K562 (cell line): ENCODE measurements at regions of chr13 and their contacts with region 1.

Region 1: GRCh38 chr13:31909864-31910551 is 121.6 kb upstream of the FRY start:
- DNase-seq: peak; percentile 12 to 58 (median 20)
- ATAC-seq: 0 out of 3 replicates have a peak, but pooled peaks have one; percentile 47
- H3K4me3 ChIP-seq: no peak overlapping the region
- H3K27ac ChIP-seq: no peak overlapping the region
- H3K4me1 ChIP-seq: no peaks in the 10 kb centered on the region; a peak in 1 of 5 replicates
- H3K27me3 ChIP-seq: no peaks in the 10 kb centered on the region; a peak in 1 of 5 replicates
- CTCF ChIP-seq: peak; percentile 50 to 77 (median 57)
- EP300 ChIP-seq: no peak
- POLR2A ChIP-seq: no peak
- RAD21 ChIP-seq: peak; percentile 54 to 71

Region 2: DNA sequence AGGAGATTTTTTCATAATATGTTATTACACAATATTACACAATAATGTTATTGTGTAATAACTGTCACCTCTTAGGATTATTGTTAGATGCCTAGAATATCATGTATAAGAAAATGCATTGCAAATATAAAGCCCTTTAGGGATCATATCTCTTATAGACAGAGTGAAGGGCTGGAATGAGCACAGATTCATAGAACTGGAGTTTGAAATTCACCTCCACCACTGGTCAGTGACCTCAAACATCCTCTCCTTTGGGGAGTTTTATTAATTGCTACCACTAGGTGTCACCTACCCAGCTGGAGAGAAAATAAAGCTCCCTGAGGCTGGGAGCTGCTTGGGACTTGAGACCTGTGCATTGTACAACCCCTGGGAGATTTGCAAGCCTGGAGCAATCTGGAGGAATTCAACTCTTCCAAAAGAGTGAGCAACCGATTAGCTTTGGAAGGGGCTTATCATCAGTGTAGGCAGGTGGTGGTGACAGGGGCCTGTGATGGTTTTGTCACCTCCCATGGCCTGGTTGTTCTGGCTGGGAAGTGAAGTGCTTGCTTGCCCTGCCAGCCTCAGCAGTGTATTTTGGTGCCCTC is 91.3 kb after region 1 on chr13:
- CTCF ChIA-PET with region 1: no interaction called
- POLR2A ChIA-PET with region 1: no interaction called
- in situ Hi-C with region 1: no loop called
- intact Hi-C with region 1: no loop called
- DNase-seq: peak; percentile 10 to 30 (median 18)
- ATAC-seq: peak; percentile 83
- H3K4me3 ChIP-seq: no peak overlapping the region
- H3K27ac ChIP-seq: no peak overlapping the region
- H3K4me1 ChIP-seq: no peaks in the 10 kb centered on the region
- H3K27me3 ChIP-seq: no peaks in the 10 kb centered on the region
- CTCF ChIP-seq: peak; percentile 29 to 50 (median 48); a peak in 5 of 6 replicates
- EP300 ChIP-seq: no peak
- POLR2A ChIP-seq: no peak
- RAD21 ChIP-seq: 0 out of 4 replicates have a peak, but pooled peaks of 1 of the 2 experiments have one; percentile 10

Region 3: GRCh38 chr13:32310134-32310706 is 400.2 kb after region 1 on chr13:
- CTCF ChIA-PET with region 1: interaction called, 9 read pairs
- POLR2A ChIA-PET with region 1: no interaction called
- in situ Hi-C with region 1: loop called (anchors 25 kb)
- intact Hi-C with region 1: loop called (anchors 2 kb)
- DNase-seq: peak; percentile 14 to 53 (median 15)
- ATAC-seq: peak; percentile 88
- H3K4me3 ChIP-seq: no peak overlapping the region
- H3K27ac ChIP-seq: no peak overlapping the region
- H3K4me1 ChIP-seq: peaks cover 0 to 7% of the 10 kb centered on the region in 2 experiments; a peak in 2 of 5 replicates
- H3K27me3 ChIP-seq: no peaks in the 10 kb centered on the region
- CTCF ChIP-seq: peak; percentile 43 to 64 (median 54); a peak in 5 of 6 replicates
- EP300 ChIP-seq: no peak
- POLR2A ChIP-seq: no peak
- RAD21 ChIP-seq: peak; percentile 63 to 68

Region 4: DNA sequence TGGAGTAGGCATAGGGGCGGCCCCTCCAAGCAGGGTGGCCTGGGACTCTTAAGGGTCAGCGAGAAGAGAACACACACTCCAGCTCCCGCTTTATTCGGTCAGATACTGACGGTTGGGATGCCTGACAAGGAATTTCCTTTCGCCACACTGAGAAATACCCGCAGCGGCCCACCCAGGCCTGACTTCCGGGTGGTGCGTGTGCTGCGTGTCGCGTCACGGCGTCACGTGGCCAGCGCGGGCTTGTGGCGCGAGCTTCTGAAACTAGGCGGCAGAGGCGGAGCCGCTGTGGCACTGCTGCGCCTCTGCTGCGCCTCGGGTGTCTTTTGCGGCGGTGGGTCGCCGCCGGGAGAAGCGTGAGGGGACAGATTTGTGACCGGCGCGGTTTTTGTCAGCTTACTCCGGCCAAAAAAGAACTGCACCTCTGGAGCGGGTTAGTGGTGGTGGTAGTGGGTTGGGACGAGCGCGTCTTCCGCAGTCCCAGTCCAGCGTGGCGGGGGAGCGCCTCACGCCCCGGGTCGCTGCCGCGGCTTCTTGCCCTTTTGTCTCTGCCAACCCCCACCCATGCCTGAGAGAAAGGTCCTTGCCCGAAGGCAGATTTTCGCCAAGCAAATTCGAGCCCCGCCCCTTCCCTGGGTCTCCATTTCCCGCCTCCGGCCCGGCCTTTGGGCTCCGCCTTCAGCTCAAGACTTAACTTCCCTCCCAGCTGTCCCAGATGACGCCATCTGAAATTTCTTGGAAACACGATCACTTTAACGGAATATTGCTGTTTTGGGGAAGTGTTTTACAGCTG is 405.4 kb after region 1 on chr13 and contains the starts of genes BRCA2 and ZAR1L:
- CTCF ChIA-PET with region 1: interaction called, 9 read pairs
- POLR2A ChIA-PET with region 1: no interaction called
- in situ Hi-C with region 1: loop called (anchors 25 kb)
- intact Hi-C with region 1: no loop called
- DNase-seq: peak; percentile 71 to 90 (median 74)
- ATAC-seq: peak; percentile 97
- H3K4me3 ChIP-seq: peak within 1 kb of the TSS; percentile 50
- H3K27ac ChIP-seq: peak within 1 kb of the TSS; percentile 92
- H3K4me1 ChIP-seq: peaks cover 0 to 11% of the 10 kb centered on the region in 2 experiments; a peak in 2 of 5 replicates
- H3K27me3 ChIP-seq: no peaks in the 10 kb centered on the region
- CTCF ChIP-seq: no peak
- EP300 ChIP-seq: peak; percentile 47; the same call in 1 of the 2 replicates
- POLR2A ChIP-seq: peak; percentile 91
- RAD21 ChIP-seq: no peak
- polyA plus RNA-seq, gene BRCA2: 4.3 to 5.6 TPM
- polyA plus RNA-seq, gene ZAR1L: not detected

Region 5: DNA sequence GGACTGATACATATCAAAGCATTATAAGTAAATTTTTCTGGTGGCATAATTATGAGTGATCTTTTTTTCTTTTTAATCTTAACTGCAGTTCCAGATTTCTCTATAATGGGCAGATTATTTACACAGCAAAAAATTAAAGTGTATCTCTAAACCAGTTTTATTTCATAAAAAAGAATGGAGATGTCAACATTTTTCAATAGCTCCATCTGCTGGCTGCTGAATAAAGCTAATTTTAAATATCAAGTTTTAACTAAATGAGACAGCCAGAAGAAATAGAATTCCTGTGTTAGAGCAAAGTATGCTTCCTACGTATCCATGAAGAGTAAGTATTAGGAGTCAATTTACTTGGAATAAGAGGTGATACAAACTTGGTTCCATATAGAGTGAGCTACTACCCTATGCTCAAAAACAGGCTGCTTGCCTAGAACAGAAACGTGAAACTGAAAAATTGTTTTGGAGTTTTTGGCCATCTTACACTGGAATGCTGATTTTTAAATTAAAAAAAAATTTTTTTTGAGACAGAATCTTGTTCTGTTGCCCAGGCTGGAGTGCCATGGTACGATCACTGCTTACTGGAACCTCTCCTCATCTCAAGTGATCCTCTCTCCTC is 671.3 kb after region 1 on chr13:
- CTCF ChIA-PET with region 1: no interaction called
- POLR2A ChIA-PET with region 1: no interaction called
- in situ Hi-C with region 1: no loop called
- intact Hi-C with region 1: loop called (anchors 5 kb)
- DNase-seq: peak in 1 of 4 experiments; percentile 11
- ATAC-seq: no peak
- H3K4me3 ChIP-seq: no peak overlapping the region
- H3K27ac ChIP-seq: no peak overlapping the region
- H3K4me1 ChIP-seq: peaks cover 2 to 4% of the 10 kb centered on the region in 2 experiments; a peak in 3 of 5 replicates
- H3K27me3 ChIP-seq: no peaks in the 10 kb centered on the region
- CTCF ChIP-seq: peak; percentile 17 to 57 (median 25); a peak in 3 of 6 replicates
- EP300 ChIP-seq: no peak
- POLR2A ChIP-seq: no peak
- RAD21 ChIP-seq: peak; percentile 18 to 58; a peak in 3 of 4 replicates